A673 (cell line): ENCODE measurements at regions of chr11 and their contacts with region 1.

Region 1: GRCh38 chr11:65779851-65780577 is 762 bp downstream of the AP5B1 start:
- DNase-seq: peak; percentile 93
- H3K4me3 ChIP-seq: peak overlapping the region; percentile 98
- H3K27ac ChIP-seq: peak overlapping the region; percentile 92
- H3K4me1 ChIP-seq: peaks cover 8% of the 10 kb centered on the region
- H3K27me3 ChIP-seq: peaks cover 6% of the 10 kb centered on the region
- CTCF ChIP-seq: peak; percentile 95

Region 2: GRCh38 chr11:64278576-64279190 is 1501.3 kb before region 1 on chr11:
- CTCF ChIA-PET with region 1: interaction called, 12 read pairs
- POLR2A ChIA-PET with region 1: no interaction called
- intact Hi-C with region 1: no loop called
- DNase-seq: no peak
- H3K4me3 ChIP-seq: no peak overlapping the region
- H3K27ac ChIP-seq: no peak overlapping the region
- H3K4me1 ChIP-seq: no peaks in the 10 kb centered on the region
- H3K27me3 ChIP-seq: no peaks in the 10 kb centered on the region
- CTCF ChIP-seq: no peak

Region 3: GRCh38 chr11:65662799-65663638 is 117.0 kb before region 1 on chr11 and contains the start of gene RELA:
- CTCF ChIA-PET with region 1: interaction called, 14 read pairs
- POLR2A ChIA-PET with region 1: no interaction called
- intact Hi-C with region 1: no loop called
- DNase-seq: peak; percentile 96
- H3K4me3 ChIP-seq: peak within 1 kb of the TSS; percentile 79
- H3K27ac ChIP-seq: peak within 1 kb of the TSS; percentile 85
- H3K4me1 ChIP-seq: peaks cover 7% of the 10 kb centered on the region
- H3K27me3 ChIP-seq: no peaks in the 10 kb centered on the region
- CTCF ChIP-seq: no peak
- total RNA-seq, gene RELA: 92.0 and 99.3 TPM in 2 replicates

Region 4: DNA sequence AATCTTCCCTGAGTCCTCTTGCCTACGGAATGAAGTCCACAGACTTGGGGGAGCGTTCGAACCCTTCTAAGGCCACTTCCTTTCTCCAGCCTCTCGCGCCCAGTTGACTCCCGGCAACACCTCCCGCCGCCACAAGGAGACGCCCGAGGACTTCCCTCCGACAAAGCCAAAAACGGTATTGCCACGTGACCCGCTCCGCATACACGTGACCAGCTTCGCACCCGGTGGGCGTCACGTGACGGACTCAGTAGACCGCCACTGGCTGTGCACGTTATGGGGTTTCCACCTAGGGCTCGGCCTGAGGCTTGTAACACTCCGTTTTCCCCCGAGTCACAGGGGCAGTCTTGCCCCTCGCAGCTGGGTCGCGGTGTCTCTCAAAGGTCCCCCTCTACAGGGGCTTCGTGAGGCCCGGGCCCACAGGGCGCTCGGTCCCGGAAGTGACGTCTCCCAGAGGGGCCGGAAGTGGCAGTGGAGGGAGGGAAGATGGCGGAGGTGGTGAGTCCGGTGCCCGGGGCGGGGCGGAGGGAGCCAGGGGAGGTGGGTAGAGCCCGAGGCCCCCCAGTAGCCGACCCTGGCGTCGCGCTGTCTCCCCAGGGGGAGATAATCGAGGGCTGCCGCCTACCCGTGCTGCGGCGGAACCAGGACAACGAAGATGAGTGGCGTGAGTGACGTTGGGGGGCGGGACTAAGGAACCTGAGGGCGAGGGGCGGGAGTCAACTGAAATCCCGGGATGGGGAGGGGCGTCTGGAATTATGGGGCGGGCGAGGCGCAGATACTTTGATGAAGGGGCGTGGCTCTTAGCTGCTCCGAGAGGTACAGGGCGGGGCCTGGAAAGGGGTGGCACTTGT is 68.0 kb before region 1 on chr11 and contains the start of gene KAT5:
- CTCF ChIA-PET with region 1: interaction called, 7 read pairs
- POLR2A ChIA-PET with region 1: interaction called, 15 read pairs
- intact Hi-C with region 1: loop called (anchors 5 kb)
- DNase-seq: peak; percentile 100
- H3K4me3 ChIP-seq: peak within 1 kb of the TSS; percentile 58
- H3K27ac ChIP-seq: peak within 1 kb of the TSS; percentile 99
- H3K4me1 ChIP-seq: peaks cover 10% of the 10 kb centered on the region
- H3K27me3 ChIP-seq: no peaks in the 10 kb centered on the region
- CTCF ChIP-seq: peak; percentile 98
- total RNA-seq, gene KAT5: 68.1 and 71.3 TPM in 2 replicates

Region 5: DNA sequence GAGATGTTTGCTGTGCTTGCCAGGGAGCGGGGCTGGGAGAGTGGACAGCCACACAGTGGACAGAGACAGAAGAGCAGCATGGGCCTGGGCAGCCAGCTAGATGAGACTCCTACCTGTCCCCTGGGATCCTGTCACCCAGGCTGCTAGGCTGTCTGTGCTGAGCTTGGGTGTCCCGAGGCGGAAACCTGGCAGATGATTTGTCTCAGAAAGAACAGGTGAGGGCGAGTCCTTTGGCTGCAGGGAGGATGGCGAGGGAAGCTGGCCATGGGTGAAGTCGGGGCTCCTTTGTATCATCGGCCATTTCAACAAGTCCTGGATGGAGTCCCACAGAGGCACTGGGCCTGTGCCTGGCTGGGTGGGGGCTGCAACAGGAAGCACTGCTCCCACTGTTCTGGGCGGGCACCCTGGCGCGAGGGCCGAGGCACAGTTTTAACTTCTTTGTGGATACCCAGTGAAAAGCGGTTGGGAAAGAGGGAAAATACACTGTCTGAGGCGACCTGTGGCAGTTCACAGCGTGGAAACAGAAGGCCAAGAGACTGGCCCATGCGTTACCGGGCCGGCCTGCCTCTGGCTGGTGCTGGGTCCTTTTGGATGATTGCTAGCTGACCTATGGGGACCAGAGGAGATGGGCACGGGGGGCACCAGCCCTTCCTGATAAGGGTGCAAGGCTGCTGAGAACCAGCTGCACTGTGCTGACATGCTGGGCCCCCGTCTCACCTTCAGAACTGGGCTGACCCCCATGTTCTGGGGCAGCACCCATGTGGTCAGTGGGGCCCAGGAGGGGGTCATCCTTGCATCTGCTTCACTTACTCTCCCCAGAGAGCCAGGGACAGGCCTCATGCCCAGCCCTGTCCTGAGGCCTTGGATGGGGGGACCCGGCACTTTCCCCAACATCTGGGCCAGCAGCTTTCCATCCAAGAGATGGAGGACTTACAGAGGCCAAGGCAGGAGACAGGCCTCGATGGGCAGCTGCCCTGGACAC is 10.9 kb after region 1 on chr11:
- CTCF ChIA-PET with region 1: interaction called, 12 read pairs
- POLR2A ChIA-PET with region 1: interaction called, 3 read pairs
- intact Hi-C with region 1: no loop called
- DNase-seq: no peak
- H3K4me3 ChIP-seq: no peak overlapping the region
- H3K27ac ChIP-seq: no peak overlapping the region
- H3K4me1 ChIP-seq: peaks cover 8% of the 10 kb centered on the region
- H3K27me3 ChIP-seq: peaks cover 42% of the 10 kb centered on the region
- CTCF ChIP-seq: no peak

Region 6: DNA sequence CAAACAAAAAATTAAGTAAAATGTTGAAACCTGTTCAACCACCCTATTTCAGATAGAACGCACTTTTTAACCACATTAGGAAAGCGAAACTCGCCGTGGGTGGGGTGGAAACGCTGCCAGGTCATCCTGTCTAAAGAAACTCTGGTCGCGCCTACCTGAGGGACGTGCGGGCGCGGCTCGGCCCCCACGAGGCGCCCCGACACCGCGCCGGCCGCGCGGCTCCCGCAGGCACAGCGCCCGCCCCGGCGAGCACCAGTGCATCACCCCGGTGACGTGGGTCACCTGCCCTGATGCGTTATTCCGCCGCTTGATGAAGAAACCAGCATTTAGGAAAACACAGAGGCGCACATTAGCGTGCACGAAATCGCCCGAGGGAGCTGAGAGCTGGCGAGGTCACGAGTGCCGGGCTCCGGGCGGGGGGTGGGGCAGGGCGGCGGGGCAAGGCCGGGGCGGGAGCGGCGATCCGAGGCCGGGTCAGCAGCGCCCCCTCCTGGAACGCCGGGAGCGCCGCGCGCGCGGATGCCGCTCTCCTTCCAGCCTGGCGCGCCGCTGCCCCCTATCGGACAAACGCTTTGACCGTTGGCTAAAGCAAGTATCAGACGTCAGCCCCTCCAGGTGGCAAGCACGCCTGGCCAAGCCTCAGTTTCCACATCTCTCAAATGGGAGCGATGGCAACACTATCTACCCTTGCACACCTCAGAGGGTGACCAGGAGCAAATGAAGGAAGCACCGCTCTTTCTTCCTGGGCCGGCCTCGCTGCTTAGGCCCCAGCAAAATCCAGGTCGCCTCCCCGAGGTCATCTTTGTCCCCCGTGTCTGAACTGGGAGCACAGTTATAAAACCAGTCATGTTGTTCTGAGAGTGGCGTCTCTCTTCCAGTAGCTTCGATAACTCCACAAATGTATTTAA is 38.1 kb after region 1 on chr11:
- CTCF ChIA-PET with region 1: interaction called, 10 read pairs
- POLR2A ChIA-PET with region 1: interaction called, 3 read pairs
- intact Hi-C with region 1: loop called (anchors 5 kb)
- DNase-seq: peak; percentile 91
- H3K4me3 ChIP-seq: peak overlapping the region; percentile 59
- H3K27ac ChIP-seq: no peak overlapping the region
- H3K4me1 ChIP-seq: no peaks in the 10 kb centered on the region
- H3K27me3 ChIP-seq: no peaks in the 10 kb centered on the region
- CTCF ChIP-seq: peak; percentile 97

Region 7: DNA sequence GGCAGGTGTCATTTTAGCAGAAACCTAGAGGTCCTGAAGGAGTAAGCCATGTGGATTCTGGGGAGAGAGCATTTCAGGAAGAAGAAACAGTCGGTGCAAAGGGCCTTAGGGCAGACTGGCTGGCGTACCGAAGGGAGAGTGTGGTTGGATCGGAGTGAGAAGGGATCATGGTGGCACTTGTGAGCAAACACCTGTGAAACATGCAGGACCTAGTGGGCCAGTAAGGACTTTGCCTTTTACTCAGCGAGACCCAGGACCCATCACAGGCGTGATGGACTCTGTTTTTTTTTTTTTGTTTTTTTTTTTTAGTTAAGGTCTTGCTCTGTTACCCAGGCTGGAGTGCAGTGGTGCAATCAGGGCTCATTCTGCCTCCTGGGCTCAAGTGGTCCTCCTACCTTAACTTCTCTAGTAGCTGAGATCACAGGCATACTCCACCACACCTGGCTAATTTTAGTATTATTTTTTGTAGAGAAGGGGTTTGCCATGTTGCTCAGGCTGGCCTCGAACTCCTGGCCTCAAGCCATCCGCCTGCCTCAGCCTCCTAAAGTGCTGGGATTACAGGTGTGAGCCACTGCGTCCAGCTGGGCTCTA is 161.8 kb after region 1 on chr11:
- CTCF ChIA-PET with region 1: no interaction called
- POLR2A ChIA-PET with region 1: no interaction called
- intact Hi-C with region 1: no loop called
- DNase-seq: no peak
- H3K4me3 ChIP-seq: no peak overlapping the region
- H3K27ac ChIP-seq: no peak overlapping the region
- H3K4me1 ChIP-seq: no peaks in the 10 kb centered on the region
- H3K27me3 ChIP-seq: no peaks in the 10 kb centered on the region
- CTCF ChIP-seq: no peak

Region 8: DNA sequence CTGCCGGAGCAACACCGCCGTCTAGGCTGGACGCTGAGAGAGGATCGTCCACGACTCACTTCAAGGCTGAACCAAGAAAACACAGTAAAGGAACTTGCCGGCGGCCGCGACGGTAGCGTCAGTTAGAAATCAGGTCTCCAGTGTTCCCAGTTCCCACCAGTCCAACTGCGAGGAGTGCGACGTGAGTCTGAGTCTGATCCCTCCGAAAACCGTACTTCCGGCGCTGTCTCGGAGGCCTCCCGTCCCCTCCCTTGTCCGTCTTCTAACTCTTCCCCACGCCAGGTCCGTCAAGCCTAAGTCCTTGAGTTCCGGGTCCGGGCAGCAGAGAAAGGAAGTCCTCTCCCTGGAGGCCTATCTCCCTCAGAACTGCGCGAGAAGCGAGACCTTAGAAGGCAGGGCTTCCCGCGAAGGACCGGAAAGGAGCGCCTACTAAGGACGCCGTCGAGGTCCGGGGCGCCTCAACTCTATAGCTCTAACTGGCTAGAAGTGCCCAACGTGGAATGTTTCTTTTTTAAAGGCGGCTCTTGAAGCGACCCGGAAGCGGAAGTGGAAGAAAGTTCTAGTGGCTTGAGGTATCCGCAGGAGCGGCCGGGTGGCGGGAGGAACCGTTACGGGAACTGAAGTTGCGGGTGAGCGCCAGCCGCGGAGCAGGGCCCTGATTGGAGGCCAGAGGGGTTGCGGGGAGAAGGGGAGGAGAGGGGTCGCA is 222.1 kb after region 1 on chr11 and contains the starts of genes BANF1 and EIF1AD:
- CTCF ChIA-PET with region 1: no interaction called
- POLR2A ChIA-PET with region 1: no interaction called
- intact Hi-C with region 1: loop called (anchors 5 kb)
- DNase-seq: peak; percentile 100
- H3K4me3 ChIP-seq: peak within 1 kb of the TSS; percentile 63
- H3K27ac ChIP-seq: peak within 1 kb of the TSS; percentile 93
- H3K4me1 ChIP-seq: peaks cover 3% of the 10 kb centered on the region
- H3K27me3 ChIP-seq: no peaks in the 10 kb centered on the region
- CTCF ChIP-seq: no peak
- total RNA-seq, gene BANF1: 541 and 556 TPM in 2 replicates
- total RNA-seq, gene EIF1AD: 69.4 and 86.2 TPM in 2 replicates